T-cell (primary cell): ENCODE measurements at regions of chr10 and their contacts with region 1.

Region 1: GRCh38 chr10:7671121-7671520 is 4.4 kb upstream of the ITIH5 start:
- DNase-seq: no peak
- ATAC-seq: no peak
- H3K4me3 ChIP-seq: no peak overlapping the region
- H3K4me3 Mint-ChIP-seq: no peak overlapping the region
- H3K27ac ChIP-seq: no peak overlapping the region
- H3K27ac Mint-ChIP-seq: no peak overlapping the region
- H3K4me1 ChIP-seq: peaks cover 2 to 12% of the 10 kb centered on the region in 2 experiments
- H3K4me1 Mint-ChIP-seq: peaks cover 7 to 12% (median 9%) of the 10 kb centered on the region in 3 donors
- H3K27me3 ChIP-seq: peaks cover 3 to 30% of the 10 kb centered on the region in 2 experiments
- H3K27me3 Mint-ChIP-seq: peaks cover 59 to 67% of the 10 kb centered on the region in 2 donors

Region 2: GRCh38 chr10:7756360-7756992 is 85.4 kb after region 1 on chr10:
- CTCF ChIA-PET with region 1: interaction called in 1 of 2 experiments, 10 read pairs
- POLR2A ChIA-PET with region 1: no interaction called
- DNase-seq: peak in 11 of 35 experiments; percentile 1 to 40 (median 5)
- ATAC-seq: no peak
- H3K4me3 ChIP-seq: no peak overlapping the region
- H3K4me3 Mint-ChIP-seq: no peak overlapping the region
- H3K27ac ChIP-seq: no peak overlapping the region
- H3K27ac Mint-ChIP-seq: no peak overlapping the region
- H3K4me1 ChIP-seq: no peaks in the 10 kb centered on the region
- H3K4me1 Mint-ChIP-seq: no peaks in the 10 kb centered on the region
- H3K27me3 ChIP-seq: no peaks in the 10 kb centered on the region
- H3K27me3 Mint-ChIP-seq: no peaks in the 10 kb centered on the region